CD8-positive, alpha-beta memory T cell (primary cell): ENCODE measurements at regions of chr9 and their contacts with region 1.

Region 1: GRCh38 chr9:131334629-131335367 is 45.3 kb downstream of the PLPP7 start:
- DNase-seq: no peak
- H3K4me3 ChIP-seq: no peak overlapping the region
- H3K4me3 Mint-ChIP-seq: no peak overlapping the region
- H3K27ac ChIP-seq: no peak overlapping the region
- H3K27ac Mint-ChIP-seq: peak overlapping the region in 1 of 8 donors; percentile 57
- H3K4me1 ChIP-seq: no peaks in the 10 kb centered on the region
- H3K4me1 Mint-ChIP-seq: peaks cover 3 to 4% (median 4%) of the 10 kb centered on the region in 3 donors
- H3K27me3 ChIP-seq: no peaks in the 10 kb centered on the region
- H3K27me3 Mint-ChIP-seq: no peaks in the 10 kb centered on the region

Region 2: GRCh38 chr9:131178382-131178781 is 156.4 kb before region 1 on chr9:
- CTCF ChIA-PET with region 1: interaction called, 175 read pairs
- POLR2A ChIA-PET with region 1: interaction called, 4 read pairs
- DNase-seq: peak; percentile 59 to 82 (median 62)
- H3K4me3 ChIP-seq: no peak overlapping the region
- H3K4me3 Mint-ChIP-seq: no peak overlapping the region
- H3K27ac ChIP-seq: no peak overlapping the region
- H3K27ac Mint-ChIP-seq: peak overlapping the region in 6 of 8 donors; percentile 9 to 84 (median 74)
- H3K4me1 ChIP-seq: peaks cover 4% of the 10 kb centered on the region
- H3K4me1 Mint-ChIP-seq: peaks cover 8 to 20% (median 12%) of the 10 kb centered on the region in 3 donors
- H3K27me3 ChIP-seq: no peaks in the 10 kb centered on the region
- H3K27me3 Mint-ChIP-seq: no peaks in the 10 kb centered on the region

Region 3: DNA sequence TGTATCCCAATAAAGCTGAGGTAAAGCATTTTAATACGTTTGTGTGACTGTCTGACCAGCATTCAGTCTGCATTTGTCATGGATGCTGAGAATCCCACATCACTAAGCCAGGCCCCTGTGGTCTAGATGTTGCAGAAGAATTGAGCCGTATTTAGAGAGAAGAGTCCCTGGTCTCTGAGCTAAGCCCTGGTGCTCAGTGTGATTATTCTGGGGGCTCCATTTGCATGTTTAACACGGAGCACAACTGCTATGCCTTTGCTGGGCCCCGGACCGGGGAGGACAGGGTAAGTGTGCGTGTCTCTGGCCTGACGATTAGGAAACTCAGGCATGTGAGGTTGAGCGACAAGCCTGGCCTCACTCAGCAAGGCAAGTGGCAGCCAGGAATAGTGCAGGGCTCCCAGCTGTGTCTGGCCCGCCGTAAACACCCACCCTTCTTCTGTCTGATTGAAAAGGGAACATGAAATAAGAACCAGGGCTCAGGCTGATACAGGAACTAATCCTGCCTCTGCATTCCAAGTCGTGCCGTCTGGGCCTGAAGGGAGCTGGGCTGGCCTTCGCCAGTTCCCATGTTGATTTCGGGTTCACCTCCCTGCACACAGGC is 80.8 kb before region 1 on chr9:
- CTCF ChIA-PET with region 1: interaction called, 14 read pairs
- POLR2A ChIA-PET with region 1: no interaction called
- DNase-seq: peak in 1 of 5 donors; percentile 44
- H3K4me3 ChIP-seq: no peak overlapping the region
- H3K4me3 Mint-ChIP-seq: peak overlapping the region; percentile 33 to 86 (median 78)
- H3K27ac ChIP-seq: no peak overlapping the region
- H3K27ac Mint-ChIP-seq: peak overlapping the region; percentile 70 to 99 (median 90)
- H3K4me1 ChIP-seq: peaks cover 76% of the 10 kb centered on the region
- H3K4me1 Mint-ChIP-seq: peaks cover 55 to 72% (median 59%) of the 10 kb centered on the region in 3 donors
- H3K27me3 ChIP-seq: no peaks in the 10 kb centered on the region
- H3K27me3 Mint-ChIP-seq: peaks cover 0 to 2% of the 10 kb centered on the region in 2 donors

Region 4: GRCh38 chr9:131277910-131278701 is 56.7 kb before region 1 on chr9:
- CTCF ChIA-PET with region 1: interaction called, 12 read pairs
- POLR2A ChIA-PET with region 1: no interaction called
- DNase-seq: peak; percentile 59 to 78 (median 63)
- H3K4me3 ChIP-seq: peak overlapping the region; percentile 52
- H3K4me3 Mint-ChIP-seq: peak overlapping the region; percentile 79 to 94 (median 88)
- H3K27ac ChIP-seq: peak overlapping the region; percentile 67
- H3K27ac Mint-ChIP-seq: peak overlapping the region; percentile 87 to 98 (median 95)
- H3K4me1 ChIP-seq: peaks cover 26% of the 10 kb centered on the region
- H3K4me1 Mint-ChIP-seq: peaks cover 25 to 36% (median 28%) of the 10 kb centered on the region in 3 donors
- H3K27me3 ChIP-seq: no peaks in the 10 kb centered on the region
- H3K27me3 Mint-ChIP-seq: peaks cover 0 to 2% of the 10 kb centered on the region in 2 donors

Region 5: DNA sequence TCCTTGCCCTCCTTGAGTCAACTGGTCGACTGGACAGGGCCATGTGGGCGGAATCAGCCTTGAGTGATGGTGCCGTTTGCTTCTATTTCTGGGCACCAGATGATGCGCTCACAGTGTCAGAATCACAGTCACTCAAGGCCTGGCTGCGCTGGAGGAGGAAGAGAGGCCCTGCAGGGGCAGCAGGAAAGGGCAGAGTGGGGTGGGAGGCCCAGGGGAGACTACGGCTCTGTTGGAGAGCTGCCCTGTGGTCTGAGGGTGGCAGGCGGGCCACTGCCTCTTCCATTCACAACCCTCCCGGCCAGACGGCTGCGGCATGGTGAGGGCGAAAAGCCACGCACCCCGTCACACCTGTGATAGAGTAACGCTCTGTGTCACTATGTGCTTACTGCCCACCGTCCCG is 35.5 kb before region 1 on chr9:
- CTCF ChIA-PET with region 1: no interaction called
- POLR2A ChIA-PET with region 1: no interaction called
- DNase-seq: no peak
- H3K4me3 ChIP-seq: no peak overlapping the region
- H3K4me3 Mint-ChIP-seq: no peak overlapping the region
- H3K27ac ChIP-seq: no peak overlapping the region
- H3K27ac Mint-ChIP-seq: no peak overlapping the region
- H3K4me1 ChIP-seq: no peaks in the 10 kb centered on the region
- H3K4me1 Mint-ChIP-seq: no peaks in the 10 kb centered on the region
- H3K27me3 ChIP-seq: no peaks in the 10 kb centered on the region
- H3K27me3 Mint-ChIP-seq: no peaks in the 10 kb centered on the region

Region 6: DNA sequence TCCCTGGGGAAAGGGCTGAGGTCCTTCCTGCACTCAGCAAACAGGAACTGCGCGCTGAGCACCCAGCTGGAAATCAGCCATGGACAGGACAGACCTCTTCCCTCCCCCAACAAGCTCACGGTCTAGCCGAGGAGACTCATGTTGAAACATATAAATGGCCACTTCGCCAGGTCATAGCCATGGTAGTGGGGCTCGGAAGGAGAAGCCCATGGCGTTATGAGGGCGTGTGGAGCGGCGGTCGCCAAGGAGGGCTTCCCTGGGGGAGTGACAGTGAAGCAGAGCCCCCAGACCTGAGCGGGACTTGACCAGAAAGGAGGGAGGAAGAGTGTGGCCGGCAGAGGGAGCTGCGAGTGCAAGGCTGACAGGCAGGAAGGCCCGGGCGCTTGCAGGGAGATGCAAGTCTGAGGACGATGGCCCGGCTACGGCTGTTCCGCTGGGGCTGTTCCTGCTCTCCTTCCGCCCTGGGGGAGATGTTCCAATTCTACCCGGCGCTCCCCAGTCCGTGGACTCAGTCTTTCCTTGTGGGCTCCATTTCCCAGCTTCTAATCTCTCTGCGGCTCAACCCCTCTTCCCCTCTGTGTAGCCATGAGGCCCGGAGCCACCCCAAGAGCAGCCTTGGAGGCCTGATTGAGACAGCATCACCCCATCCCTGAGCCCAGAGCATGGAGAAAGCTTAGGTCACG is 15.2 kb after region 1 on chr9:
- CTCF ChIA-PET with region 1: interaction called, 12 read pairs
- POLR2A ChIA-PET with region 1: no interaction called
- DNase-seq: peak; percentile 70 to 89 (median 78)
- H3K4me3 ChIP-seq: no peak overlapping the region
- H3K4me3 Mint-ChIP-seq: peak overlapping the region in 2 of 7 donors; percentile 32 to 61
- H3K27ac ChIP-seq: no peak overlapping the region
- H3K27ac Mint-ChIP-seq: peak overlapping the region in 2 of 8 donors; percentile 37 to 43
- H3K4me1 ChIP-seq: peaks cover 7% of the 10 kb centered on the region
- H3K4me1 Mint-ChIP-seq: peaks cover 5 to 7% (median 7%) of the 10 kb centered on the region in 3 donors
- H3K27me3 ChIP-seq: no peaks in the 10 kb centered on the region
- H3K27me3 Mint-ChIP-seq: peaks cover 3 to 6% of the 10 kb centered on the region in 2 donors